Heart left ventricle (tissue), 16 donors: ENCODE measurements at regions of chr13 and their contacts with region 1.

Region 1: GRCh38 chr13:51583875-51584730 is at the start of gene WDFY2:
- DNase-seq: peak; percentile 100
- ATAC-seq: peak; percentile 95 to 98 (median 97)
- H3K4me3 ChIP-seq: peak within 1 kb of the TSS; percentile 76 to 96 (median 94)
- H3K27ac ChIP-seq: peak within 1 kb of the TSS; percentile 68 to 96 (median 88)
- H3K4me1 ChIP-seq: peaks cover 0 to 46% (median 12%) of the 10 kb centered on the region in 12 donors
- H3K27me3 ChIP-seq: no peaks in the 10 kb centered on the region
- CTCF ChIP-seq: peak in 7 of 12 donors; percentile 4 to 45 (median 28)
- POLR2A ChIP-seq: peak in 1 of 2 donors; percentile 92
- total RNA-seq, gene WDFY2: 3.9 to 12.6 (median 7.4) TPM

Region 2: GRCh38 chr13:51435002-51435578 is 149.0 kb before region 1 on chr13:
- intact Hi-C with region 1: no loop called
- DNase-seq: no peak
- ATAC-seq: no peak
- H3K4me3 ChIP-seq: no peak overlapping the region
- H3K27ac ChIP-seq: no peak overlapping the region
- H3K4me1 ChIP-seq: peaks cover 0 to 5% (median 0%) of the 10 kb centered on the region in 12 donors
- H3K27me3 ChIP-seq: no peaks in the 10 kb centered on the region
- CTCF ChIP-seq: peak; percentile 21 to 69 (median 51)
- POLR2A ChIP-seq: no peak

Region 3: GRCh38 chr13:51564676-51565075 is 19.4 kb before region 1 on chr13:
- intact Hi-C with region 1: loop called in 1 of 10 experiments (anchors 1 kb)
- DNase-seq: no peak
- ATAC-seq: no peak
- H3K4me3 ChIP-seq: no peak overlapping the region
- H3K27ac ChIP-seq: no peak overlapping the region
- H3K4me1 ChIP-seq: peaks cover 0 to 29% (median 0%) of the 10 kb centered on the region in 12 donors
- H3K27me3 ChIP-seq: no peaks in the 10 kb centered on the region
- CTCF ChIP-seq: no peak
- POLR2A ChIP-seq: no peak

Region 4: GRCh38 chr13:51721496-51721895 is 137.4 kb after region 1 on chr13:
- intact Hi-C with region 1: loop called in 5 of 10 experiments (anchors 5 to 10 kb)
- DNase-seq: peak in 4 of 5 donors; percentile 47 to 77 (median 62)
- ATAC-seq: peak; percentile 87 to 93 (median 90)
- H3K4me3 ChIP-seq: no peak overlapping the region
- H3K27ac ChIP-seq: peak overlapping the region in 11 of 12 donors; percentile 28 to 66 (median 56)
- H3K4me1 ChIP-seq: peaks cover 0 to 41% (median 8%) of the 10 kb centered on the region in 12 donors
- H3K27me3 ChIP-seq: no peaks in the 10 kb centered on the region
- CTCF ChIP-seq: no peak
- POLR2A ChIP-seq: no peak

Region 5: DNA sequence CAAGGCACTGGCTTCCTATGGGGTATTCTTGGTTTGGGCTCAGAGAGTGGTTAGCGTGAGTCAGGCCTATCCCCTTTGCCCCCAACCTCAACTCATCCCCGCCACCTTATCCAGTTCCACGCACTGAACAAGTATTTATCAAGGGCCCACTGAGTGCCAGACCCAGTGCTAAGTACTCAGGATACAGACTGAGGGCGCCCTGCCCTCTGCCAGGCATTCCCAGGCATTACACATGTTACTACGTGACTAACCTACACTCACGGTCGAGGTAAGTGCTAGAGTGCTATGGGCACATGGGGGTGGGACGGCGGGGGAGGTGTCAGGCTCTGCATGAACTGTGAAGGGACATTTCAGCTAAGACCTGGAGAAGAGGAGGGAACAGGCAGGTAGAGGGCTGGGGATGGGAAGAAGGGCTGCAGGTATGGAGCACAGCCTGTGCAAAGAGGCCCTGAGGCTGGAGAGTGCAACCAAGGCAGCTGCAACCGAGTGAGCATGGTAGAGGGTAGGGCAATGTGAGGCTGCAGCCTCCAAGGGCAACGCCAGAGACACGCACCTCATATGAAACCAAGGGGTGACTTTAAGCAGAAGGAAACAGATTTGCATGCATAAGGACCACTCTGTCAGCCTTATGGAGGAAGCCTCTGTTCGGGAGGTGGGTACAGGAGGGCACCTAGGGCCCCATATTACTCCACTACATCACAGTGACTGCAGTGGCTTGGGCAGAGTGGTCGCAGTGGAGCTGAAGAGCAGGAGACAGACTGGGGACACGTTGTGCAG is 197.3 kb after region 1 on chr13:
- intact Hi-C with region 1: loop called in 1 of 10 experiments (anchors 5 kb)
- DNase-seq: peak in 1 of 5 donors; percentile 43
- ATAC-seq: peak; percentile 26 to 60 (median 56)
- H3K4me3 ChIP-seq: no peak overlapping the region
- H3K27ac ChIP-seq: no peak overlapping the region
- H3K4me1 ChIP-seq: peaks cover 0 to 16% (median 10%) of the 10 kb centered on the region in 12 donors
- H3K27me3 ChIP-seq: no peaks in the 10 kb centered on the region
- CTCF ChIP-seq: peak in 5 of 12 donors; percentile 16 to 35 (median 24)
- POLR2A ChIP-seq: no peak

Region 6: GRCh38 chr13:52011632-52012511 is 427.8 kb after region 1 on chr13 and contains the start of gene ALG11:
- intact Hi-C with region 1: loop called in 1 of 10 experiments (anchors 5 kb)
- DNase-seq: peak; percentile 99 to 100 (median 100)
- ATAC-seq: peak; percentile 100
- H3K4me3 ChIP-seq: peak within 1 kb of the TSS; percentile 63 to 98 (median 91)
- H3K27ac ChIP-seq: peak within 1 kb of the TSS; percentile 64 to 90 (median 84)
- H3K4me1 ChIP-seq: peaks cover 0 to 32% (median 21%) of the 10 kb centered on the region in 12 donors
- H3K27me3 ChIP-seq: peaks cover 0 to 9% (median 0%) of the 10 kb centered on the region in 9 donors
- CTCF ChIP-seq: peak in 2 of 12 donors; percentile 5 to 16
- POLR2A ChIP-seq: peak in 1 of 2 donors; percentile 30
- total RNA-seq, gene ALG11: 11.6 to 32.9 (median 21.8) TPM